ENCODE measurements at regions of chr6 and their contacts with region 1.

Region 1: DNA sequence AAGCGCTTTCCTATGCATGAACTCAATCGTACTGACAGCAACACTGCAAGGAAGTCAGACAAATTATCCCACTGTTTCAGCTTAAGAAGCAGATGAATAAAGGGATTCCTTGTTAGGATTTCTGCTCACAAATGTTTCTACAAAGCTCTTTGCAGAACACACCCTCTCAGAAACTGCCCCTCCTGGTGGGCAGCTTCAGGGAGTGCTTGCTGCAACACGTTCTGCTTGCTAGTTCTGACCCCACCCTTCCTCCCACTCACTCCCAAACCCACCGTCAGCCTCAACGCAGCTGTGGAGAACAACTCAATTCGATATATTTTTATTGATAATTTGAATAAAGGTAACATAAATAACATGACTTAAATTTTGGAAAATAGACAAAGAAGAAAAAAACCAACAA is 250.8 kb upstream of the PRDM1 start:
- DNase-seq: peak; percentile 64
- H3K4me3 ChIP-seq: no peak overlapping the region
- H3K27ac ChIP-seq: no peak overlapping the region
- H3K4me1 ChIP-seq: peaks cover 12% of the 10 kb centered on the region
- H3K27me3 ChIP-seq: no peaks in the 10 kb centered on the region
- CTCF ChIP-seq: peak; percentile 33 to 56

Region 2: GRCh38 chr6:105797983-105798453 is 37.4 kb before region 1 on chr6:
- CTCF ChIA-PET with region 1: no interaction called
- dilution Hi-C with region 1: no loop called
- in situ Hi-C with region 1: no loop called
- intact Hi-C with region 1: no loop called
- DNase-seq: no peak
- H3K4me3 ChIP-seq: no peak overlapping the region
- H3K27ac ChIP-seq: no peak overlapping the region
- H3K4me1 ChIP-seq: peaks cover 5% of the 10 kb centered on the region
- H3K27me3 ChIP-seq: no peaks in the 10 kb centered on the region
- CTCF ChIP-seq: no peak

Region 3: GRCh38 chr6:105880030-105880492 is 44.7 kb after region 1 on chr6:
- CTCF ChIA-PET with region 1: no interaction called
- dilution Hi-C with region 1: loop called (anchors 10 kb)
- in situ Hi-C with region 1: no loop called
- intact Hi-C with region 1: no loop called
- DNase-seq: no peak
- H3K4me3 ChIP-seq: no peak overlapping the region
- H3K27ac ChIP-seq: no peak overlapping the region
- H3K4me1 ChIP-seq: no peaks in the 10 kb centered on the region
- H3K27me3 ChIP-seq: no peaks in the 10 kb centered on the region
- CTCF ChIP-seq: no peak

Measured in mammary epithelial cell (primary cell).